CD4-positive, alpha-beta T cell (primary cell): ENCODE measurements at regions of chr17 and their contacts with region 1.

Region 1: DNA sequence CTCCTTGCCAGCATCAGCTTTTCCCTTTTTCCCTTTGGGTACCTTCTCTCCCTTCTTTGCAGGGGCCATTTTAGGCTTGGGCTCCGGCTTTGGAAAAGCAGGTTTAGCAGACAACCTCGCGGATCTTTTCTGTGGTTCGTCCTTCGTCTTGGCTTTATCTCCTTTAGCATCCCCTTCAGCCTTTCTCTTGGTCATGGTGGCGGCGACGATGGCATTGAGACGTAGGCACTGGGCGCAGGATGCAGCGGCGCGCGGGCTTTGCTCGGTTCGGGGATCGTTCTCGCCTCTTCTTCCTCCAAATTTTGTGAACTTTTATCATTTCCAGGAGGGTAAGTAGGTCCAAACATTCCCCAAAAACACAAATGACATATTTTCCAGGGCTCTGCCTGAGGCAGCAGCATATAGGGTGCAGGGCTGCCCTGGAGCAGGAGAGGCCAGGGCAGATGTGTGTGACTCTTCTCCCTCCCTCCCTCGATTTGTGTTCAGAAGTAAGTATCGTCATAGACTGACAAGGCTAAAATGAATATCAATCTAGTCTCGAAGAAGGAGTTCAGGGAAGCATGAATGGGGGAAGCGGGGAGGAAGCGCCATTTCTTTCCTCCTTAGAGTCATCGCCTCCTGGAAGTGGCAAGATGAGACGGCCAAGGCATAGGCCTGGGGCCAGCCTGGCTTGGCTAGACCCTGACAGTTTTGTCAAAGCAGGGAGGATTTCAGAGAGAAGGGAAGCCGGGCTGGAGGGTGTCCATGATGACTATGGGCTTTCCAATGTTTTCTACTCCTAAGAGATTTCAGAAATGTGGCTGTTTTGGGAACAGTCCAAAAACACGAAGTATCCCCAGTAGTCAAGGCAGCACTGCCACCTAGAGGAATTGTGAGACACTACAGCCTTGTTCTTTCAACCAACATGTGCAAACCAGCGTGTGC is 13.2 kb downstream of the CHCT1 start:
- DNase-seq: peak; percentile 19 to 83 (median 41)
- ATAC-seq: peak; percentile 81
- H3K4me3 ChIP-seq: no peak overlapping the region
- H3K4me3 Mint-ChIP-seq: no peak overlapping the region
- H3K27ac ChIP-seq: no peak overlapping the region
- H3K27ac Mint-ChIP-seq: no peak overlapping the region
- H3K4me1 ChIP-seq: peaks cover 6% of the 10 kb centered on the region
- H3K4me1 Mint-ChIP-seq: no peaks in the 10 kb centered on the region
- H3K27me3 ChIP-seq: no peaks in the 10 kb centered on the region
- H3K27me3 Mint-ChIP-seq: peaks cover 5% of the 10 kb centered on the region
- CTCF ChIP-seq: peak; percentile 94

Region 2: DNA sequence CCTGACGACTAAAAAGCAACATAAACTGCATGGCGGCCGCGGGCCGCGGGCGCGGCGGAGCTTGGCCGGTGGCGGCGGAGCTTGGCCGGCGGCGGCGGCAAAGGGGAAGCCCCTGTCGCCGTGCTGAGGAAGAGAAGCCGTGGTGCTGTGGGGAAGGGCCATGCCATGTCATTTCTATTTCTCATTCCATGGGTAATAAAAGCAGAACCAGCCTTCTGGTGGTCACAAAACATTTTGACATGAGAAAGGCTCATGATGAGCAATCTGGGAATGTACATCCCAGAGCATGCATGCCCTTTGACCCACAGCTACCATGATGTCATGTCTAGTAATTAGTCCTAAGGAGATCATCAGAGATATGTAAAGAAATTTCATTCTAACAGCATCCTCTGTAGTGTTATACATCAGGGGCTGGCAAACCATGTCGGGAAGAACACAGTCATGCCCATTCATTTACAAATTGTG is 332.8 kb before region 1 on chr17:
- CTCF ChIA-PET with region 1: no interaction called
- POLR2A ChIA-PET with region 1: no interaction called
- intact Hi-C with region 1: loop called (anchors 5 to 10 kb)
- DNase-seq: peak in 7 of 14 experiments; percentile 6 to 68 (median 21)
- ATAC-seq: peak; percentile 74
- H3K4me3 ChIP-seq: peak overlapping the region; percentile 12
- H3K4me3 Mint-ChIP-seq: peak overlapping the region; percentile 70
- H3K27ac ChIP-seq: no peak overlapping the region
- H3K27ac Mint-ChIP-seq: no peak overlapping the region
- H3K4me1 ChIP-seq: no peaks in the 10 kb centered on the region
- H3K4me1 Mint-ChIP-seq: peaks cover 9% of the 10 kb centered on the region
- H3K27me3 ChIP-seq: peaks cover 3 to 11% of the 10 kb centered on the region in 2 experiments
- H3K27me3 Mint-ChIP-seq: peaks cover 63% of the 10 kb centered on the region
- CTCF ChIP-seq: no peak

Region 3: DNA sequence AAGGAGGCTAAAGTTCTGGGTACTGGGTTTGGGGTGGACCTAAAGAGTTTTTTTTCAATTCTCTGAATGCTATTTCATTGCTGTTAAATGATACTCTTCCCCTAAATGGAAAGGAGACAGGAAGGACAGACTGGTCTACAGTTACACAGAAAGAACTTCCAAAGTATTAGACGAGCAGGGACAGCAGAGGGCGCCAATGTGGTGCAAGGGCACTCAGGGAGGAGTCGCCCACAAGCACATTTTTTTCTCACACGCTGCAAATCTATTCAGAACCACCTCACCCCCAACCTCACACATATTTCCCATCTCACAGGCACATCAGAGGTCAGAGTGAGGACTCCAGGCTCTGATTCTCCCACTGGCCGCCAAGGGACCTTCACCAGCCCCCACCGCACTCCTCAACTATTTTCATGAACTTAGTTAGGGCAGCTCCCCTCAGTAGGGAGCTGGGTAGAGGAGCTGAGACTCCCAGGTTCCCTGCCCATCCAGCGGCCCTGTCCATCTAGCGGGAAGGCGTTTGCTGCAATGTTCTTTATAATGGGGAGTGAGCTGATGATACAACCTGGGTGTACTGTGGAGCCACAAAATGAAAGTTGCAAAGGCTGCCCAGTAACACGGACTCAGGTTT is 292.5 kb before region 1 on chr17:
- CTCF ChIA-PET with region 1: no interaction called
- POLR2A ChIA-PET with region 1: no interaction called
- intact Hi-C with region 1: loop called (anchors 1 kb)
- DNase-seq: peak; percentile 60 to 82 (median 66)
- ATAC-seq: peak; percentile 78
- H3K4me3 ChIP-seq: no peak overlapping the region
- H3K4me3 Mint-ChIP-seq: no peak overlapping the region
- H3K27ac ChIP-seq: no peak overlapping the region
- H3K27ac Mint-ChIP-seq: no peak overlapping the region
- H3K4me1 ChIP-seq: peaks cover 30% of the 10 kb centered on the region
- H3K4me1 Mint-ChIP-seq: peaks cover 18% of the 10 kb centered on the region
- H3K27me3 ChIP-seq: peaks cover 67 to 86% of the 10 kb centered on the region in 2 experiments
- H3K27me3 Mint-ChIP-seq: peaks cover 96% of the 10 kb centered on the region
- CTCF ChIP-seq: peak; percentile 71

Region 4: GRCh38 chr17:60231234-60231633 is 204.3 kb before region 1 on chr17:
- CTCF ChIA-PET with region 1: no interaction called
- POLR2A ChIA-PET with region 1: no interaction called
- intact Hi-C with region 1: loop called in 1 of 2 experiments (anchors 5 kb)
- DNase-seq: no peak
- ATAC-seq: no peak
- H3K4me3 ChIP-seq: no peak overlapping the region
- H3K4me3 Mint-ChIP-seq: no peak overlapping the region
- H3K27ac ChIP-seq: no peak overlapping the region
- H3K27ac Mint-ChIP-seq: no peak overlapping the region
- H3K4me1 ChIP-seq: no peaks in the 10 kb centered on the region
- H3K4me1 Mint-ChIP-seq: no peaks in the 10 kb centered on the region
- H3K27me3 ChIP-seq: no peaks in the 10 kb centered on the region
- H3K27me3 Mint-ChIP-seq: no peaks in the 10 kb centered on the region
- CTCF ChIP-seq: peak; percentile 48

Region 5: DNA sequence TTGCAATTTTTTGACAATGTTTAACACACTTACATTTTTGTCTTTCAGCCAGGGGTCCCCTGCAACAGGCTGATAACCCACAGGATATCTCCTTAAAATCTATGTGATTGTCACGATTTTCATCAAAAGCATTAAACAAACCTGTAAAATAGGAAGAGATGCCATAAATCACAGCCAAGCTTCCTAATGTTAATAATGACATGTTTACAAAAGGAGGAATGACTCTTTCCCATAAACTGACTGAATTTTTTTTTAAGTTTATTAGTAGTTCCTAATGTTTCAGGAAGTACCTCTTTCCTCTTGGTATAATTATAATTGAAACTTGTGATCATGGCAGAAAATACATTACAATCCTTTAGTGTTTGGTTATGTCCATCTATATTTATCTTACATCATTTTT is 166.1 kb before region 1 on chr17:
- CTCF ChIA-PET with region 1: no interaction called
- POLR2A ChIA-PET with region 1: no interaction called
- intact Hi-C with region 1: loop called in 1 of 2 experiments (anchors 10 kb)
- DNase-seq: no peak
- ATAC-seq: no peak
- H3K4me3 ChIP-seq: no peak overlapping the region
- H3K4me3 Mint-ChIP-seq: no peak overlapping the region
- H3K27ac ChIP-seq: no peak overlapping the region
- H3K27ac Mint-ChIP-seq: no peak overlapping the region
- H3K4me1 ChIP-seq: no peaks in the 10 kb centered on the region
- H3K4me1 Mint-ChIP-seq: no peaks in the 10 kb centered on the region
- H3K27me3 ChIP-seq: no peaks in the 10 kb centered on the region
- H3K27me3 Mint-ChIP-seq: no peaks in the 10 kb centered on the region
- CTCF ChIP-seq: no peak

Region 6: GRCh38 chr17:60421273-60421934 is 14.1 kb before region 1 on chr17:
- CTCF ChIA-PET with region 1: no interaction called
- POLR2A ChIA-PET with region 1: no interaction called
- intact Hi-C with region 1: loop called in 1 of 2 experiments (anchors 1 kb)
- DNase-seq: peak; percentile 55 to 85 (median 65)
- ATAC-seq: peak; percentile 95
- H3K4me3 ChIP-seq: peak overlapping the region; percentile 52
- H3K4me3 Mint-ChIP-seq: peak overlapping the region; percentile 79
- H3K27ac ChIP-seq: no peak overlapping the region
- H3K27ac Mint-ChIP-seq: peak overlapping the region; percentile 24
- H3K4me1 ChIP-seq: peaks cover 13% of the 10 kb centered on the region
- H3K4me1 Mint-ChIP-seq: peaks cover 5% of the 10 kb centered on the region
- H3K27me3 ChIP-seq: no peaks in the 10 kb centered on the region
- H3K27me3 Mint-ChIP-seq: no peaks in the 10 kb centered on the region
- CTCF ChIP-seq: peak; percentile 100